Heart left ventricle (tissue), 16 donors: ENCODE measurements at regions of chrX and their contacts with region 1.

Region 1: GRCh38 chrX:73850124-73851013 is 287.4 kb downstream of the CHIC1 start:
- DNase-seq: peak in 1 of 5 donors; percentile 46
- ATAC-seq: peak in 1 of 4 donors; percentile 1
- H3K4me3 ChIP-seq: peak overlapping the region in 3 of 12 donors; percentile 42 to 78 (median 73)
- H3K27ac ChIP-seq: peak overlapping the region in 2 of 12 donors; percentile 65 to 80
- H3K4me1 ChIP-seq: peaks cover 0 to 32% (median 0%) of the 10 kb centered on the region in 12 donors
- H3K27me3 ChIP-seq: no peaks in the 10 kb centered on the region
- CTCF ChIP-seq: peak in 2 of 12 donors; percentile 8 to 16
- POLR2A ChIP-seq: no peak

Region 2: DNA sequence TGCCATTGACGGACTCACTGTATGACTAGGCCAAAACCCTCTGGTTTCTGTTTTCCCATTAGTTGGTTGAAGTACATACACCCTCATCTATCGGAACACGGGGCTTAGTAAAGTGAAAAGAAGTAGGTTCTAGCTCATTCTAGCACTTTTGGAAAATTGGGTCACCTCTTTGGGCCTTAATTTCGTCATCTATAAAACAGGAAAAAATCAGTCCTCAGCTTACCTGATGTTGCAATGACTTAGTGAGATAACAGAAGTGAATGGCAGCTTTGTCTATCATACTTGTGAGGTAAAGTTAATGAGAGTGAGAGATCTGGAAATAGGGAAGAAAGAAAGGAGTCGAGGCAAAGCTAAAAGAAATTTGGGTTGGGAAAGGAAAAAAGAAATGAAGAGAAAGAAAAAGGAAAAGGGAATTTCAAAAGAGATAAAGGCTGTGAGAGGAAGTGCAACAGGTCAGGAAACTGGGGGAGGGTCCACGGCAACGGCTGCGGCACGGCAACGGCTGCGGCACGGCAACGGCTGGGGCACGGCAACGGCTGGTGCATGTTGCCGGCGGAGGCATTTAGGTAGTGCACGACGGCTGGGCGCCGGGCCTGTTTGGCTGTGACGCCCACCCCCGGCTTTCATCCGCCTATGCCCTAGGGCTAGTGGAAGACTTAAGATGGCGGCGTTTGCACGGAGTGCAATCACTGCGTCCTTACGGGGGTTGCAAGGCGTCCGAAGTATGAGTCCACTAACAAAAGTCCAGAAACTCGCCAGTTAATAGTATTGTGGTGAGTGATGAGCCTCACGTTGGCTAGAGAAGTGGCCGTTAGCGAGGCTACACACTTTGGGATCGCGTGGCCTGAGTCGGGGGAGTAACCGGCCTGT is 93.6 kb after region 1 on chrX:
- intact Hi-C with region 1: loop called in 2 of 10 experiments (anchors 2 to 10 kb)
- DNase-seq: peak; percentile 81 to 91 (median 90)
- ATAC-seq: peak; percentile 99 to 100 (median 100)
- H3K4me3 ChIP-seq: peak overlapping the region; percentile 69 to 92 (median 78)
- H3K27ac ChIP-seq: peak overlapping the region; percentile 61 to 88 (median 82)
- H3K4me1 ChIP-seq: peaks cover 0 to 28% (median 3%) of the 10 kb centered on the region in 12 donors
- H3K27me3 ChIP-seq: no peaks in the 10 kb centered on the region
- CTCF ChIP-seq: peak in 1 of 12 donors; percentile 11
- POLR2A ChIP-seq: no peak

Region 3: DNA sequence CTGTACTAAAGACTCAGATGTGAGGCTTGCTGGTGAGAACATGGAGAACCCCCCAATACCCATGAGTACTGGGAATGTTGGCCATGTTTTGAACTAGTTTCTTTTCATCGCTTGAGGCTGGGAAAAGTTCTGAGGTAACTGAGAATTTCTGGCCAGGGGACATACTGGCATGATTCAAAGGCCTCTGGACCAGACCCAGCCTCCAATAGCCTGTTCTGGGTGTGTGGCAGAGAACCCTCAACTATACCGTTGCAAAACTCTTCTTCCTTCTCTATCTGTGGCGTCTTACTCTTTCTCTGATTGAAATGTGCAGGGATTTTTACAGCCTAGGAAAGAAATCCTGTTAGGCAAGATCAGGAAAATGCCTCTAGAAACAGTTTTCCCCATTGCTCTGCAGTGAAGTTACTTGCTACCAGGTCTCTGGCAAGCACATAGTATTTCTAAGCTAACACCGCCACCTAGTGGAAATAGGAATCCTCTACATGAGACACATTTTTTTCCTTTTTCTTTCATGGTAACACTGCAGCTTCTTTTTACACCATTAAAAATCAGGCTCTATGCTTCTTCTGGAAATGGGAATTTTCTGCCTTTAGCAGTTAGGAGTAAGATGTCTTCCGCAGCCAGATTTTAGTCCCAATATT is 282.9 kb after region 1 on chrX:
- intact Hi-C with region 1: loop called (anchors 1 to 10 kb)
- DNase-seq: no peak
- ATAC-seq: peak in 3 of 4 donors; percentile 53 to 78 (median 74)
- H3K4me3 ChIP-seq: no peak overlapping the region
- H3K27ac ChIP-seq: peak overlapping the region in 1 of 12 donors; percentile 26
- H3K4me1 ChIP-seq: no peaks in the 10 kb centered on the region
- H3K27me3 ChIP-seq: peaks cover 0 to 2% (median 0%) of the 10 kb centered on the region in 9 donors
- CTCF ChIP-seq: peak; percentile 48 to 85 (median 66)
- POLR2A ChIP-seq: no peak

Region 4: GRCh38 chrX:74550295-74550802 is 700.0 kb after region 1 on chrX:
- intact Hi-C with region 1: loop called in 6 of 10 experiments (anchors 5 to 10 kb)
- DNase-seq: peak; percentile 78 to 88 (median 81)
- ATAC-seq: peak; percentile 71 to 95 (median 90)
- H3K4me3 ChIP-seq: peak overlapping the region in 3 of 12 donors; percentile 8 to 32 (median 25)
- H3K27ac ChIP-seq: peak overlapping the region in 1 of 12 donors; percentile 15
- H3K4me1 ChIP-seq: no peaks in the 10 kb centered on the region
- H3K27me3 ChIP-seq: peaks cover 0 to 10% (median 0%) of the 10 kb centered on the region in 9 donors
- CTCF ChIP-seq: peak; percentile 88 to 99 (median 95)
- POLR2A ChIP-seq: no peak